ENCODE measurements at regions of chr2 and their contacts with region 1.

Region 1: GRCh38 chr2:206693399-206694137 is 24.6 kb downstream of the DYTN start:
- DNase-seq: peak; percentile 14 to 36
- H3K4me3 ChIP-seq: no peak overlapping the region
- H3K27ac ChIP-seq: no peak overlapping the region
- H3K4me1 ChIP-seq: no peaks in the 10 kb centered on the region
- H3K27me3 ChIP-seq: no peaks in the 10 kb centered on the region
- CTCF ChIP-seq: peak; percentile 72

Region 2: GRCh38 chr2:206670531-206671319 is 22.8 kb before region 1 on chr2:
- CTCF ChIA-PET with region 1: no interaction called
- POLR2A ChIA-PET with region 1: no interaction called
- intact Hi-C with region 1: no loop called
- DNase-seq: no peak
- H3K4me3 ChIP-seq: no peak overlapping the region
- H3K27ac ChIP-seq: no peak overlapping the region
- H3K4me1 ChIP-seq: no peaks in the 10 kb centered on the region
- H3K27me3 ChIP-seq: no peaks in the 10 kb centered on the region
- CTCF ChIP-seq: no peak

Region 3: GRCh38 chr2:206765242-206766056 is 71.9 kb after region 1 on chr2 and contains the starts of genes FASTKD2 and MDH1B:
- CTCF ChIA-PET with region 1: no interaction called
- POLR2A ChIA-PET with region 1: no interaction called
- intact Hi-C with region 1: loop called (anchors 5 kb)
- DNase-seq: peak; percentile 73 to 79
- H3K4me3 ChIP-seq: peak within 1 kb of the TSS; percentile 82
- H3K27ac ChIP-seq: peak within 1 kb of the TSS; percentile 74
- H3K4me1 ChIP-seq: peaks cover 16% of the 10 kb centered on the region
- H3K27me3 ChIP-seq: no peaks in the 10 kb centered on the region
- CTCF ChIP-seq: no peak
- total RNA-seq, gene FASTKD2: 12.0 and 12.1 TPM in 2 replicates
- total RNA-seq, gene MDH1B: 2.7 and 4.1 TPM in 2 replicates